H1 (cell line): ENCODE measurements at regions of chr5 and their contacts with region 1.

Region 1: GRCh38 chr5:42514754-42515153 is 91.5 kb downstream of the GHR start:
- DNase-seq: no peak
- H3K4me3 ChIP-seq: no peak overlapping the region
- H3K27ac ChIP-seq: no peak overlapping the region
- H3K4me1 ChIP-seq: no peaks in the 10 kb centered on the region
- H3K27me3 ChIP-seq: no peaks in the 10 kb centered on the region
- CTCF ChIP-seq: peak in 2 of 3 experiments; percentile 41 to 59; a peak in 3 of 4 replicates
- EP300 ChIP-seq: no peak
- POLR2A ChIP-seq: no peak
- RAD21 ChIP-seq: peak; percentile 53 to 57

Region 2: GRCh38 chr5:42500003-42500599 is 14.7 kb before region 1 on chr5:
- CTCF ChIA-PET with region 1: interaction called, 14 read pairs
- POLR2A ChIA-PET with region 1: no interaction called
- DNase-seq: no peak
- H3K4me3 ChIP-seq: no peak overlapping the region
- H3K27ac ChIP-seq: no peak overlapping the region
- H3K4me1 ChIP-seq: peaks cover 0 to 6% (median 2%) of the 10 kb centered on the region in 4 experiments; a peak in 4 of 7 replicates
- H3K27me3 ChIP-seq: no peaks in the 10 kb centered on the region
- CTCF ChIP-seq: no peak
- EP300 ChIP-seq: no peak
- POLR2A ChIP-seq: no peak
- RAD21 ChIP-seq: no peak

Region 3: DNA sequence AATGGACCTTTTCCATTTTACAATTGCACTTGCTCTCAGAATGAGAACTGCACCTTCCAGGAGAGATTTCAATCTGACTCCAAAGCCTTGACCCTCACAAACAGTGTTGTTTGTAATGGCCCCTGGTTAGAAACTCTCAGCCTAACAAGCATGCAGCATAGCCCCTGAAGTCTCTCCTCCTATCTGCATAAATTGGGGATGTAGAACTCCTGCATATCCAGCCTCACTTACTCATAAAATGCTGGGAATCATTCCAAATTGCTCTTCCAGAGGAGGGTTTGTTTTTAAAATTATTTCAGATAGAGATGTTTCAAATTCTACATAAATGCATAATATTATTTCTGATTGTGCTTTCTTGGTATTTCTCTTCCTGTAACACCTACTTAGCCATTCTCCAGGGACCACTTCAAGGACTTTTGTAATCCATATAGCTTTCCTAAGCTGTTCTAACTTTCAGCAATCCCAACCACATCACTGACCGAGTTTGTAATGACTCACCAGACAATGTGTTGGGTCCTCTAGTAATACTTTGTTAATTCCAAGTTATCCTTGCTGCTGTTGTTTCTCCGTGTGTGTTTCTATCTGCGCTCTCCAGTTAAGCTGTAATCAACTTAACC is 98.1 kb after region 1 on chr5:
- CTCF ChIA-PET with region 1: no interaction called
- POLR2A ChIA-PET with region 1: no interaction called
- DNase-seq: no peak
- H3K4me3 ChIP-seq: no peak overlapping the region
- H3K27ac ChIP-seq: no peak overlapping the region
- H3K4me1 ChIP-seq: no peaks in the 10 kb centered on the region
- H3K27me3 ChIP-seq: no peaks in the 10 kb centered on the region
- CTCF ChIP-seq: no peak
- EP300 ChIP-seq: no peak
- POLR2A ChIP-seq: no peak
- RAD21 ChIP-seq: no peak

Region 4: DNA sequence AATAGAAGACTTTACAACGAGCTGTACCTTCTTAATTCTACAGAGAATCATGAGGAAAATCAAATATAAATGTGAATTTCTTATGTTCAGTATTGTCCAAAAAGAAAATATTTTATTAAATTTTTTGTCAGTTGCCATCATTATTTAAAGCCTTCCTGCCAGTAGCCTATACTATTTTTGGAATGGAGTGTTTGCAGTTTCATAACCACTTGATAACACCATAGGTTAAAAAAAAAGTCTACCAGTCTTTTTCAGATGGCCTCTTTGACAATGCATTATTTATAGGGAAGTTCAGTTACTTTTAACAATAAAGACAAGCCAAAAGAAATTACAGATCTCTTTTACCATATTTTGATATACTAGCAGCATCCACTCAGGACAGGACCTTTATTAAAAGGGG is 161.6 kb after region 1 on chr5:
- CTCF ChIA-PET with region 1: no interaction called
- POLR2A ChIA-PET with region 1: no interaction called
- DNase-seq: no peak
- H3K4me3 ChIP-seq: no peak overlapping the region
- H3K27ac ChIP-seq: no peak overlapping the region
- H3K4me1 ChIP-seq: no peaks in the 10 kb centered on the region
- H3K27me3 ChIP-seq: no peaks in the 10 kb centered on the region
- CTCF ChIP-seq: no peak
- EP300 ChIP-seq: no peak
- POLR2A ChIP-seq: no peak
- RAD21 ChIP-seq: no peak